Dorsolateral prefrontal cortex (tissue), 120 donors: ENCODE measurements at regions of chr2 and their contacts with region 1.

Region 1: DNA sequence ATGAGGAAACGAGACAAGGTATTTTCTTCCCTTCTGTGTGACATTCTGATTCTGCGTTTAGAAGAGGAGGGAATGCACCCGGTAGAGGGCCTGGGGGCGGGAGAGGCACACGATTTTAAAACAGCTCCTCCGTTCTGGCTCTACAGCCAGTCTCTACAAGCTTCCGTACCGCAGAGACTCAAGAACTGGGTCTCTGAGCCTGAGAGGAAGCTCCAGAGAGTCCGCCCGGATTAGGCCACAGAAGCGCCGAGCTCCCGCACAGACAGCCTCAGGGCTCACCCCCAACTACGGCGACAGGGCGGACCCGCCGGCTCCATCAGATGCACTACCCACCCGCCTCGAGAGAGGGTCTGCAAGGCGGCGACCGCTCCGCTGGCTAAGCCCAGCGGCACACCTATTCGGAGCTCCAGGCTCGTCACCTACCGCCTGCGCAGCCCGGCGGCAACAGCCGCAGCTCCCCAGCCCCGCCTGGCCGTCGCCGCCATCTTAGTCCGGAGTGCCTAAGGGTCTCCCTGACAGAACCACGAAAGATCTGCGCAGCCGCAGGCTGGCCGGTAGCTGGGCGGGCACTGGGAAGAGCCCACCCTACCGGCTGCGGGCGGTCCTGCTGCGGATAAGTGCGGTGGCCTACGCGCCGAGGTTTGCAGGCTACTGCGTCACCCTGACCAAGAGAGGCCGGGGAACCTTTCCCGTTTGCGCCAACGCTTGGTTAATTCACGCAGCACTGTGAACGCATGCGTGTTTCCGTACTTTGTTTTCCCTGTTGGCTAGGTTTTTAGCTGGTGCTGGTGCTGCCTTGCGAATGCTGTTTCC is at the start of gene NFU1:
- DNase-seq: peak; percentile 90 to 97 (median 95)
- H3K4me3 ChIP-seq: peak within 1 kb of the TSS; percentile 60 to 99 (median 92)
- H3K27ac ChIP-seq: peak within 1 kb of the TSS; percentile 86 to 100 (median 98)
- H3K27me3 ChIP-seq: no peaks in the 10 kb centered on the region
- CTCF ChIP-seq: peak; percentile 29 to 85 (median 68)
- total RNA-seq, gene NFU1: 27.9 to 60.5 (median 41.9) TPM

Region 2: GRCh38 chr2:69514406-69514805 is 77.3 kb after region 1 on chr2:
- intact Hi-C with region 1: loop called in 1 of 2 experiments (anchors 2 kb)
- DNase-seq: peak in 8 of 10 donors; percentile 30 to 71 (median 47)
- H3K4me3 ChIP-seq: peak overlapping the region in 2 of 59 donors; percentile 4 to 31
- H3K27ac ChIP-seq: peak overlapping the region; percentile 41 to 94 (median 84)
- H3K27me3 ChIP-seq: no peaks in the 10 kb centered on the region
- CTCF ChIP-seq: no peak

Region 3: DNA sequence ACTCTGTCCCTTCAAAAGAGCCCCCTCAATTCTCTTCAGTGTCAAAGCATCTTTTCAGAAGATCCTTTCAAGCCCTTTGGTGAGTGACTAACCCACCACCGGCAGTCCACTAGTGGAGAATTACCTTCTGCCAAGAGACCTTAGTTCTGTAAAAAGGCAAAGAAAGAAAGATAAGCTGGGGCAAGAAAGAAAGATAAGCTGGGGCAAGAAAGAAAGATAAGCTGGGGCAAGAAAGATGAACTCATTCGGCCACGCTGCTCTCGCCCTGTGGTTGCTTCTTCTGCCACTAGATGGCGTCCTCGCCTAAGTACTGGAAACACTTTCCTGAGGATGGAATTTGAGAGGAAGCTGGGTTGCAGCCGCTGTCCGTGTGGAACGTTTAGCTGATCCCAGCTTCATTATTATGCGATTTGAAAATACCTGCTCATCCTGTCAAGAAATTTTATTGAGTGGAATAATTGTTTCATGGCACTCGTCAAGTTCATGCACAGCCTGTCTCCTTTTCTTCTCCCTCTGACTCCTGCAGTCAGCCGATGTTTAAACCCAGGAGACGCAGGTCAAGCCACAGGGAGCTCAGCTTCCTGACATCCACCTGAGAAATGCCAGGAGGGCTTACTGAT is 287.5 kb after region 1 on chr2:
- intact Hi-C with region 1: no loop called
- DNase-seq: peak; percentile 80 to 96 (median 88)
- H3K4me3 ChIP-seq: peak overlapping the region; percentile 27 to 68 (median 51)
- H3K27ac ChIP-seq: peak overlapping the region in 12 of 59 donors; percentile 2 to 74 (median 38)
- H3K27me3 ChIP-seq: no peaks in the 10 kb centered on the region
- CTCF ChIP-seq: peak; percentile 91 to 99 (median 97)